ENCODE measurements at regions of chr15 and their contacts with region 1.

Region 1: DNA sequence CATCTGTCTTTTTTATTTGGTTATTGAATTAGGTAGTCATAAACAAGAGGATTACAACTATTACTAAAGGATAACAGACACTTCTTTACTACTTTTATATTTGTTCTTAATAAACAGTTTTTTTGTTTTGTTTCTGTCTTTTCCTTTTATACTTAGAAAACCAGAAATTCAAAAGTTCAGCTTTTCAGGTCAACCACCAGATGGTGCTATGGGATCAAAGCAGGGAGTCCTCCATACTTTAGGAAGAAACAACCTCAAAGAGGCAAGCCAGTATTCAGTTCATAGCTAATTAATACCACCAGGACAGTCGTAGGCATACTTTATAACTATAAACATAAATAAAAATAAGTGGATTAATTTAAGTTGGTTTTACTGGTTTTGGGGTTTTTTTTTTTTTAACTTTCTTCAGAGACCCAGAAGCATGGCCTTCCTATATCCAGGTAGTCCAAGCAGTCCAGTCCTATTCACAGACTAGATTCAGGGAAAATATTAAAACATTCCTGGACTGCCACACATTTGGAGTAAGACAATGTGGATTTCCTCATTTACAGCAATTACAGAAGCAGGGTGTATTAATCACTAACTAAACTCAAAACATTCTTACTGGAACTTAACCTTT is 16.0 kb upstream of the EID1 start:
- DNase-seq: peak; percentile 77
- H3K4me3 ChIP-seq: no peak overlapping the region
- H3K27ac ChIP-seq: no peak overlapping the region
- H3K4me1 ChIP-seq: no peaks in the 10 kb centered on the region
- CTCF ChIP-seq: peak; percentile 99

Region 2: DNA sequence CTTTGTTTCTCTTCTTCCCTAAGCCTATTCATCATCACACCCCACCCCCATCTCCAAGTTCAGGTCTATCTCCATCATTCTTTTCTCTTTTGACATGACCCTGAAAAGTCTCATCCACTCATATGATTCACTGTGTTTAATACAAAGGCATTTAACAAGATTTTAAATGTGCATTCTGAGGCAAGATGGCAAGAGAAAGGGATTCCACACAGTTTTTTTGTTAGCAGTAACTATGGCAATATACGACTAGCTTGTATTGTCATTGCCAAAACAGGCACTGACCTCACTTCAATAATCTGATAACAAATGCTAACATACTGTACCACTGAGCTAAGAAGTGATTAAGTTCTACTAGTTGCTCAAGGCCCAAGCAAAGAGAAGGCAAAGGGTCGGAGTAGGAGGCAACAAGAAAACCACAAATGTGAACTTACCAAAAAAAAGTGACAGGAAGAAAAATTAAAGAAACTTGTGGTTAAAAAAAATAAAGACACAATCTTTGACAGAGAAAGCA is 269.6 kb before region 1 on chr15:
- CTCF ChIA-PET with region 1: no interaction called
- POLR2A ChIA-PET with region 1: no interaction called
- intact Hi-C with region 1: no loop called
- DNase-seq: no peak
- H3K4me3 ChIP-seq: no peak overlapping the region
- H3K27ac ChIP-seq: no peak overlapping the region
- H3K4me1 ChIP-seq: no peaks in the 10 kb centered on the region
- CTCF ChIP-seq: no peak

Region 3: GRCh38 chr15:48794697-48795134 is 67.2 kb before region 1 on chr15:
- CTCF ChIA-PET with region 1: no interaction called
- POLR2A ChIA-PET with region 1: no interaction called
- intact Hi-C with region 1: no loop called
- DNase-seq: no peak
- H3K4me3 ChIP-seq: no peak overlapping the region
- H3K27ac ChIP-seq: no peak overlapping the region
- H3K4me1 ChIP-seq: no peaks in the 10 kb centered on the region
- CTCF ChIP-seq: no peak

Region 4: DNA sequence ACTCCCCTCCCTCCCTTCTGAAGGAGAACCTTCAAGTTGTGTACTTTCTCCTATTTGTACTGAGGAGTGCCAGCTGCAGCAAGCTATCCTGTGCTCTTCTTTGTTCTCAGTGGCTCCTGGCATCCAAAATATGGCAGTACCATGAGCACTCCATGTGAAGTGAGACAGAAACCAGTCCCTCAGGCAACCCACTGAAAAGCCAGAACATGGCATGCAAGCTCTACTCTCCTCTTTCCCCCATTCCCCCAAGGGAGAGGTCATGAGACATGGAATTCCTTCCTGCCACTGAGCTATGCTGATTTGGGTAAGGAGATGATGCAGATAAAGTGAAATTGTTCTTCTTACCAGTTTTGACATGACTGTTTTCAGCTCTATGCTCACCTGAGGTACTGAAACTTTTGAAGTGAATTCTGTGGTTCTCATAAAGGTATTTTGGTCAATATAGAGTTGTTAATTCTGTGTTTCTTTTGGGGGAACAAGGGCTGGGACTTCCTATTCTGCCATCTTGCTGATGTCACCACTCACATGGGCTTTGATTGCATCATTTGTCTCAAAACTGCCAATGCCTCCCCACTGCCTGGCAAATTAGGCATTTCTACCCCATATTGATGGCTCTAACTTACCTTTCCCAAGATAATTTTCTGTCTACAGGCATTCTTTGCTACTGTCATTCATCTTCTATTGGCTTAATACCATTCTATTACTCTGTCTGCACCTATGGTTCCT is 28.3 kb before region 1 on chr15:
- CTCF ChIA-PET with region 1: no interaction called
- POLR2A ChIA-PET with region 1: no interaction called
- intact Hi-C with region 1: no loop called
- DNase-seq: no peak
- H3K4me3 ChIP-seq: no peak overlapping the region
- H3K27ac ChIP-seq: no peak overlapping the region
- H3K4me1 ChIP-seq: no peaks in the 10 kb centered on the region
- CTCF ChIP-seq: no peak

Region 5: GRCh38 chr15:48887144-48887543 is 25.2 kb after region 1 on chr15:
- CTCF ChIA-PET with region 1: no interaction called
- POLR2A ChIA-PET with region 1: no interaction called
- intact Hi-C with region 1: no loop called
- DNase-seq: no peak
- H3K4me3 ChIP-seq: no peak overlapping the region
- H3K27ac ChIP-seq: no peak overlapping the region
- H3K4me1 ChIP-seq: no peaks in the 10 kb centered on the region
- CTCF ChIP-seq: no peak

Region 6: DNA sequence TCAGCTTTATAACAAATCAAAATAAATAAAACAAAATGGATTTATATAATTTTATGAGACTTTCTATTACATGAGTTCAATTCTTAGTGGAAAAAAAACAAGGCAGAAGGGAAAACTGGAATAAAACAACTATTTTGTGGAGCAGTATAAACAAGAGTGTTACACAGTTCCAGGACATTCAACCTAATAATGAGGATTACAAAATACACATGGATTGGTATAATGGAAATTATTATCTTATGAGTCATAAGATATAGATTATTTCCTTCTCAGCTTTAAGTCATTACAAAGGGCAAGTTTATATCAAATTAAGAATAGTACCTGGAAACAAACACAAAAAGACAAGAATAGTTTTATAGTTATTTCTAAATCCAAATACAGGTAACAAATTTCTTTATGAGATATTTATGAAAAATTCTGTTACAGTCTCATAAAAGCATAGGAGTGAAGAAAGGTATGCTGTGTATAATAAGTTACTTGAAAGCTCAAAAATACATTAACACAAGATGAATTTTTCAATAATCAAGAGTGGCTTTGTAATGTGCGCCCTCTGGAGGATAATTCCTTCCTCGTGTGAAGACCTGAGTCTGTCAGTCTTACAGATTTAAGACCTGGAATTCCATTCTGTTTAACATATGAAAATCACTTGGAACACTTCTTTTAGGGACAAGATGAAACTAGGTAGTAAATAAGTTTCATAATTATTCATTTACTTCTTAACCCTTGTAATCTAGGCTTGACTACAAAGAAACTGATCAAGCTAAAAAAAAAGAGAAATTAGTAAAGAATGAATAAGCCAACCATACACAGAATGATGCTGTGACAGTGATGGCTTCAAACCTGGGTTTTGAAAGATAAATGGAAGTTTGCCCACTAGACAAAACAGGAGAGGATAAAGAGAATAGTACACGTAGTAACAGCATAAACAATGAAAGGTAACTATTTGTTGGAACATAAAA is 284.0 kb after region 1 on chr15:
- CTCF ChIA-PET with region 1: no interaction called
- POLR2A ChIA-PET with region 1: no interaction called
- intact Hi-C with region 1: loop called (anchors 2 kb)
- DNase-seq: peak; percentile 49
- H3K4me3 ChIP-seq: no peak overlapping the region
- H3K27ac ChIP-seq: no peak overlapping the region
- H3K4me1 ChIP-seq: peaks cover 14% of the 10 kb centered on the region
- CTCF ChIP-seq: peak; percentile 95

Region 7: GRCh38 chr15:49421991-49422390 is 560.1 kb after region 1 on chr15:
- CTCF ChIA-PET with region 1: no interaction called
- POLR2A ChIA-PET with region 1: interaction called, 3 read pairs
- intact Hi-C with region 1: loop called (anchors 1 kb)
- DNase-seq: peak; percentile 69
- H3K4me3 ChIP-seq: no peak overlapping the region
- H3K27ac ChIP-seq: no peak overlapping the region
- H3K4me1 ChIP-seq: no peaks in the 10 kb centered on the region
- CTCF ChIP-seq: peak; percentile 98

Region 8: GRCh38 chr15:50003786-50004334 is 1141.9 kb after region 1 on chr15:
- CTCF ChIA-PET with region 1: no interaction called
- POLR2A ChIA-PET with region 1: no interaction called
- intact Hi-C with region 1: loop called (anchors 1 kb)
- DNase-seq: peak; percentile 78
- H3K4me3 ChIP-seq: no peak overlapping the region
- H3K27ac ChIP-seq: no peak overlapping the region
- H3K4me1 ChIP-seq: no peaks in the 10 kb centered on the region
- CTCF ChIP-seq: peak; percentile 82

Region 9: DNA sequence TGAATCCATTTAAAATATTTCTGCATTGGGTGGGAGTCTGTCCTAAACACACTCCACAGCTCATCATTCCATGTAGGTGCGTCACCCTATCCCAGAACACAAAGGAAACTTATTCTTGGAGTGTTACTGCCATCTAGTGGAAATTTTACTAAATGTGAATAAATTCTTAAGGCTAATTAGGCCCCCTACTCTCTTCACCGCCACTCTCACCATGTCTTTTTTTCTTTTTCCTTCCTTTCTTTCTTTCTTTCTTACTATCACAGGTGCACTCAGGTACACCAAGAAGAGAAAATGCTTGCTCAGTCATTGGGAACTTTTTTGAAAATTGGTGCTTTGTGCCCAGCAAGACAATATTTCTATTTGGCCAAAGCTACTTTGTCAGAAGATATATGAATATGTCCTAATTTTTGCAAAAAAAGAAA is 1283.5 kb after region 1 on chr15:
- CTCF ChIA-PET with region 1: no interaction called
- POLR2A ChIA-PET with region 1: no interaction called
- intact Hi-C with region 1: loop called (anchors 10 kb)
- DNase-seq: peak; percentile 60
- H3K4me3 ChIP-seq: no peak overlapping the region
- H3K27ac ChIP-seq: no peak overlapping the region
- H3K4me1 ChIP-seq: no peaks in the 10 kb centered on the region
- CTCF ChIP-seq: peak; percentile 80